Activated T-helper 1 cell treated with anti-CD3 and anti-CD28 coated beads, Interleukin-12 subunit alpha, Interleukin-12 subunit beta, Interleukin-2, Interleukin-4 antibody, amounts not matched to agents 30 ng/mL and 10 ng/mL and 1 ng/mL, durations not matched to agents 14 hours and 24 hours and 36 hours (primary cell): ENCODE measurements at regions of chr1 and their contacts with region 1.

Region 1: GRCh38 chr1:11037740-11038182 is 9.3 kb downstream of the MASP2 start:
- DNase-seq: peak; percentile 80
- H3K4me3 Mint-ChIP-seq: no peak overlapping the region
- H3K27ac Mint-ChIP-seq: no peak overlapping the region
- H3K4me1 Mint-ChIP-seq: peaks cover 7% of the 10 kb centered on the region
- H3K27me3 Mint-ChIP-seq: peaks cover 3% of the 10 kb centered on the region

Region 2: GRCh38 chr1:10209905-10210810 is 827.6 kb before region 1 on chr1 and contains the start of gene KIF1B:
- intact Hi-C with region 1: no loop called
- DNase-seq: peak; percentile 97
- H3K4me3 Mint-ChIP-seq: peak within 1 kb of the TSS; percentile 92
- H3K27ac Mint-ChIP-seq: peak within 1 kb of the TSS; percentile 83
- H3K4me1 Mint-ChIP-seq: peaks cover 35% of the 10 kb centered on the region
- H3K27me3 Mint-ChIP-seq: peaks cover 12% of the 10 kb centered on the region
- total RNA-seq, gene KIF1B: 15.8 and 19.0 TPM in 2 replicates

Region 3: GRCh38 chr1:10901086-10901890 is 136.5 kb before region 1 on chr1:
- intact Hi-C with region 1: no loop called
- DNase-seq: no peak
- H3K4me3 Mint-ChIP-seq: no peak overlapping the region
- H3K27ac Mint-ChIP-seq: no peak overlapping the region
- H3K4me1 Mint-ChIP-seq: no peaks in the 10 kb centered on the region
- H3K27me3 Mint-ChIP-seq: no peaks in the 10 kb centered on the region

Region 4: GRCh38 chr1:11072216-11072917 is 34.6 kb after region 1 on chr1:
- intact Hi-C with region 1: loop called (anchors 5 kb)
- DNase-seq: no peak
- H3K4me3 Mint-ChIP-seq: no peak overlapping the region
- H3K27ac Mint-ChIP-seq: no peak overlapping the region
- H3K4me1 Mint-ChIP-seq: no peaks in the 10 kb centered on the region
- H3K27me3 Mint-ChIP-seq: no peaks in the 10 kb centered on the region

Region 5: GRCh38 chr1:11099310-11100149 is 61.8 kb after region 1 on chr1 and contains the start of gene EXOSC10:
- intact Hi-C with region 1: loop called (anchors 1 kb)
- DNase-seq: peak; percentile 96
- H3K4me3 Mint-ChIP-seq: peak within 1 kb of the TSS; percentile 96
- H3K27ac Mint-ChIP-seq: peak within 1 kb of the TSS; percentile 96
- H3K4me1 Mint-ChIP-seq: peaks cover 13% of the 10 kb centered on the region
- H3K27me3 Mint-ChIP-seq: no peaks in the 10 kb centered on the region
- total RNA-seq, gene EXOSC10: 93.5 and 103 TPM in 2 replicates

Region 6: DNA sequence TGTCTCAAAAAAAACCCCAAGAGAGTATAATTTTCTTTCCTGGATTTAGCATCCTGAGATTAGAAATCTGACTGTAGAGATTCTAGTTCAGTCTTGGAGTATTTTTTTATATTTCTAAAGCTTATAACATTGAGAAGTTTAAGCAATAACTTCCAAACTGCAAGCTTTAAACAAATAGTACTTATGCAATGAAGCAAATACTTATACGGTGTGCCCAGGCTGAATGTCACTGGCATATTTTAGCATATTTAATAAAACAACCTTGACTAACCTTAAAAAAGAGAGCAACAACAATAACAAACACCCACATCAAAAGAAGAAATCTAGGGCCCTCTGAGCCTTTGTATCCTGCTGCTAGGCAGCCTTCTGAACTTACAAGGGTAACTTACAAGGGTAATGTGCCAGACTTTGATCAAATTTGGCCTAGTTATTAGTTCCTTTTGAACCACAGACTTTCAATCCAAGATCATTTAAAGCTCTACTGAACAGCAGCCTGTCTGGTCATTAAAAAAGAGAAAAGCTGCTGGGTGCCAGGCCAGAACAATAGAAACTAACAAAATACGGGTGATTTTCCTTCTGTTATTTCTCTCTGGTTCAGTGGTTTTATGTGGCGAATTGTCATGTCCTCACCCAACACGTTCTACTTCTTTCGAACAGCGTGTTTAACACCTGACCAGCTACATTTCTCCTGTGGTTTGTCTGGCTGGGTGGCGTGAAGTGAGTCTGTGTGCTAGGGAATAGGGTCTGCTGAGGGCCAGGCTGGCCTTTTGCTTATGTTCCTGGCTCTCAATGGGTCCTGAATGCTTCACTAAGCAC is 208.4 kb after region 1 on chr1:
- intact Hi-C with region 1: loop called (anchors 1 kb)
- DNase-seq: no peak
- H3K4me3 Mint-ChIP-seq: no peak overlapping the region
- H3K27ac Mint-ChIP-seq: no peak overlapping the region
- H3K4me1 Mint-ChIP-seq: no peaks in the 10 kb centered on the region
- H3K27me3 Mint-ChIP-seq: no peaks in the 10 kb centered on the region

Region 7: GRCh38 chr1:11719313-11720032 is 681.7 kb after region 1 on chr1:
- intact Hi-C with region 1: loop called (anchors 2 kb)
- DNase-seq: peak; percentile 72
- H3K4me3 Mint-ChIP-seq: peak overlapping the region; percentile 81
- H3K27ac Mint-ChIP-seq: peak overlapping the region; percentile 78
- H3K4me1 Mint-ChIP-seq: peaks cover 16% of the 10 kb centered on the region
- H3K27me3 Mint-ChIP-seq: peaks cover 6% of the 10 kb centered on the region